Activated naive CD4-positive, alpha-beta T cell treated with anti-CD3 and anti-CD28 coated beads for 36 hours (primary cell): ENCODE measurements at regions of chr12 and their contacts with region 1.

Region 1: DNA sequence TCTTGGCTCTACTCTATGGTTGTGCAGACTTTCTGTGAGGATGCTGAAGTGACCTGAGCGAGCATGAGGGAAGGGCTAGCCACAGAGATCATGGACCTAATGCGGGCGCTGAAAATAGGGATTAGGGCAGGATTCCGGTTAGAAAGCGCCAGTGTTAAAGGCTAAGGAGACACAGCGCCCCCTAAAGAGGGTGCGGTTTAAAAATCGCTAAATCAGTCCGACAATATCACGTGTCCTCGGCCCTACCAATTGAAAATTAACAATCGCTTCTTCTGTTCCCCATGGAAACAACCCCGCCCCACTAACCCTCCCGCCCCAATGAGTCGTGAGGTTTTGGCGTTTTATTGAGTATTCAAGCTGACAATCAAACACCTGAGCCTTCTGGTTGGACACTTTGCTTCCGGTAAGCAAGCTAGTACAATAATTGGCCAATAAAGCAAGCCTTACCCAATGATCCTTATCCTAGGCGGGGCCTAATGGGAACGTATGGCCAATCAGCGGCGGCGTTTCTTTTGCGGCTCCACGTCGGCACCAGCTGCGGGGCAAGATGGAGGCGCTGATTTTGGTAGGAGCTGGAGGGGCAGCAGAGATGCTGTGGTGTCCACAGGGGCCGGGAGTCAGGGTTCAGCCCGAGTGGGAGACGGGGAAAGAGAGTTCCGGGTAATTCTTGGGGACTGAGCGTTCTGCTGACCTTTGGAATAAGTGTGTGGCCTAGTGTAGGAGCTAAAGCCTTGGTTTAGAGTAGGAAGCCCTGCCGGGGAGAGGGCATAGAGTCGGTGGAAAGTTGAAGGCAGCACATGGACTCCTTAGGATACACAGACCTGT is at the start of gene COPZ1:
- DNase-seq: peak; percentile 98
- H3K4me3 Mint-ChIP-seq: peak within 1 kb of the TSS; percentile 100
- H3K27ac Mint-ChIP-seq: peak within 1 kb of the TSS; percentile 93
- H3K4me1 Mint-ChIP-seq: peaks cover 44% of the 10 kb centered on the region
- H3K27me3 Mint-ChIP-seq: no peaks in the 10 kb centered on the region
- total RNA-seq, gene COPZ1: 98.0 to 105 TPM

Region 2: GRCh38 chr12:54220092-54220557 is 104.7 kb before region 1 on chr12:
- CTCF ChIA-PET with region 1: interaction called, 6 read pairs
- intact Hi-C with region 1: loop called (anchors 1 kb)
- DNase-seq: peak; percentile 84
- H3K4me3 Mint-ChIP-seq: no peak overlapping the region
- H3K27ac Mint-ChIP-seq: no peak overlapping the region
- H3K4me1 Mint-ChIP-seq: peaks cover 19% of the 10 kb centered on the region
- H3K27me3 Mint-ChIP-seq: peaks cover 4% of the 10 kb centered on the region

Region 3: DNA sequence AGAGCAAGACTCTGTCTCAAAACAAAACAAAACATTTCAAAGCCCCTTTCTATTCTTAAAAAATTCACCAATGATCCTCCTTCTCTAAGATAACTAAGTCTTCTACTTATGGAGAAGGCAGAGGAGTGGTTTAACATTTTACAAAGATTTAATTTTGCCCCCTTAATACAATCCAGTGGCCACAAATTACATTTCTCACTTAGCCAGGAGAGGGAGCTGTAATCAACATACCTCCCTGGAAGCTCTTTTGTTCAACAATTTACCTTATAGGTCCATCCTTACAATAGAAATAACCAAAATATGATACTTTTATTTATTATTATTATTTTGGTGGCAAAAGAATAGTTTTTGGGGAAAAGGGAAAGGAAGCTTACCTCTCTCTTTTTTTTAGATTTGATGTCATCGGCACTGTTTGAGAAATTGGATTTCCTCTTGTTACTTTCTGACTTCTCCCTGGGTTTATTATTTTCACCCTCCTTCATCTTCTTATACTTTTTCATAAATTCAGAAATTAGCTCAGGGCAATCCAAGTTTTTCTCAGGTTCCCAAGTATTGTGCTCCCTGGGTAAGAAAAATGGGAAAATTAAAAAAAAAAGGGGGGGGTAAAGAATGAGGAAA is 73.1 kb before region 1 on chr12:
- CTCF ChIA-PET with region 1: interaction called, 4 read pairs
- intact Hi-C with region 1: loop called (anchors 2 kb)
- DNase-seq: no peak
- H3K4me3 Mint-ChIP-seq: no peak overlapping the region
- H3K27ac Mint-ChIP-seq: no peak overlapping the region
- H3K4me1 Mint-ChIP-seq: peaks cover 8% of the 10 kb centered on the region
- H3K27me3 Mint-ChIP-seq: no peaks in the 10 kb centered on the region

Region 4: GRCh38 chr12:54337280-54337842 is 12.5 kb after region 1 on chr12:
- CTCF ChIA-PET with region 1: interaction called, 45 read pairs
- intact Hi-C with region 1: no loop called
- DNase-seq: no peak
- H3K4me3 Mint-ChIP-seq: no peak overlapping the region
- H3K27ac Mint-ChIP-seq: no peak overlapping the region
- H3K4me1 Mint-ChIP-seq: peaks cover 22% of the 10 kb centered on the region
- H3K27me3 Mint-ChIP-seq: no peaks in the 10 kb centered on the region

Region 5: GRCh38 chr12:54368709-54369583 is 44.1 kb after region 1 on chr12:
- CTCF ChIA-PET with region 1: interaction called, 4 read pairs
- intact Hi-C with region 1: loop called (anchors 1 kb)
- DNase-seq: peak; percentile 97
- H3K4me3 Mint-ChIP-seq: peak overlapping the region; percentile 23
- H3K27ac Mint-ChIP-seq: no peak overlapping the region
- H3K4me1 Mint-ChIP-seq: peaks cover 41% of the 10 kb centered on the region
- H3K27me3 Mint-ChIP-seq: no peaks in the 10 kb centered on the region